Activated T-helper 1 cell treated with anti-CD3 and anti-CD28 coated beads, Interleukin-12 subunit alpha, Interleukin-12 subunit beta, Interleukin-2, Interleukin-4 antibody, amounts not matched to agents 30 ng/mL and 10 ng/mL and 1 ng/mL, durations not matched to agents 14 hours and 24 hours and 36 hours (primary cell): ENCODE measurements at regions of chr1 and their contacts with region 1.

Region 1: DNA sequence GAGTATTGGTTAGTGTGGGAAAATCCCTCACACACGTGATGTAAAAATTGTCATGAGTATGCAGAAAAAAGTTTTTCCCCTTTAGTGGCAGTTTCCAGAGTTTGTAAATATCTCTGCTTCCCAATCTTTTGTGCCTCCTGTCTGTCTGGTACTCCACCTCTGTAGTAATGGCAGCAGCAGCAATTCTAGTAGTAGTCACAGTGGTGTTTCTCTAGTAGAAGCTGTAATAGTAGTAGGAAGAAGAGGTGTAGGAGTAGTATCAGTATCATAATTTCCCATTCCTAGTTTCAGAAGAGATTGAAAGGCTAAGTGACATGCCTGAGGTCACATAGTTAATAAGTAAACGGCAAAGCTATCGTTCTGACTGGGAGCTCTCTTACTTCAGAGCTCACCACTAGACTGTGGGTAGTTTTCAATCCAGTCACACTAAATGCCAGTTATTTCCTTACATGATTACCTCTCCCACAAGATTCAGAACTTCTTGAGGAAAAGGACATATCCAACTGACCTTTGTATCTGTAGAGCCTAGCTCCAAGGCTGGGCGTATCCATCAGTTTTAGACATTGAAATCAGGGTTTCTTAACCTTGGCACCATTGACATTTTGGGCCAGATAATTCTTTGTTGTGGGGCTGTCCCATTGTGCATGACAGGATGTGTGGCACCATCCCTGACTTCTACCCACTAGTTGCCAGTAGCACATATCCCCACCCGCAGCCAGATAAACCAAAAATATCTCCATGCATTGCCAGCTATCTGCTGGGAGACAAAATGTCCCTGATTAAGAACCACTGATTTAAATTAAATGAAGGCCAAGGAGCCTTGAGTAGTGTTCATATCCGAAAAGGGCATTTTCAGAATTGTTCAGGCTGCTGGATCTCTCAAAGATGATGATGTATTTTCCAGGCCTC is 135.9 kb downstream of the FGGY start:
- DNase-seq: no peak
- H3K4me3 Mint-ChIP-seq: no peak overlapping the region
- H3K27ac Mint-ChIP-seq: peak overlapping the region; percentile 61
- H3K4me1 Mint-ChIP-seq: peaks cover 49% of the 10 kb centered on the region
- H3K27me3 Mint-ChIP-seq: no peaks in the 10 kb centered on the region

Region 2: DNA sequence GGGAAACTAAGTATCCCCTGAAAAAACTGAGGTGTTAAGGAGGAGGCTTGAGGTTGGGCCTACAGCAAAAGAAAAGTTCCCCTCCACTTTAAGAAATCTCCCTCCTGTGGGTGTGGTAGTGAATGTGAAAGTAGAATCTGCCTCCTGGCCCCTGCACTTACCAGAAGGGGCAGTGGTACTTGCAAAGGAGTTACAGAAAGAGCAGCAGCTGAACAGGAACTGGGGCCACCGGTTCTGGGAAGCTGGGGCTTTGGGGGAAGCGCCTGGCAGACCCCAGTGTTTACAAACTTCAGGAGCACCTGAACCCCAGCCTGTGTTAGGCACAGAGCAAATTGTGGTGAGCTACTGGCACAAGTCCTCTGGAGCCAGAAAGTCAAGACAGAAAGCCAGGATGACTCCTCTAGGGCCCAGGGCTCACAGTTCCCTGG is 386.0 kb before region 1 on chr1:
- intact Hi-C with region 1: loop called (anchors 2 kb)
- DNase-seq: peak; percentile 62
- H3K4me3 Mint-ChIP-seq: peak overlapping the region; percentile 67
- H3K27ac Mint-ChIP-seq: peak overlapping the region; percentile 71
- H3K4me1 Mint-ChIP-seq: peaks cover 77% of the 10 kb centered on the region
- H3K27me3 Mint-ChIP-seq: no peaks in the 10 kb centered on the region

Region 3: GRCh38 chr1:59296358-59297256 is 136.2 kb before region 1 on chr1 and contains the start of gene FGGY:
- intact Hi-C with region 1: loop called (anchors 2 kb)
- DNase-seq: peak; percentile 86
- H3K4me3 Mint-ChIP-seq: peak within 1 kb of the TSS; percentile 91
- H3K27ac Mint-ChIP-seq: peak within 1 kb of the TSS; percentile 91
- H3K4me1 Mint-ChIP-seq: peaks cover 48% of the 10 kb centered on the region
- H3K27me3 Mint-ChIP-seq: no peaks in the 10 kb centered on the region
- total RNA-seq, gene FGGY: 7.1 and 8.2 TPM in 2 replicates

Region 4: GRCh38 chr1:59354709-59355337 is 78.0 kb before region 1 on chr1:
- intact Hi-C with region 1: loop called (anchors 1 kb)
- DNase-seq: no peak
- H3K4me3 Mint-ChIP-seq: peak overlapping the region; percentile 13
- H3K27ac Mint-ChIP-seq: peak overlapping the region; percentile 94
- H3K4me1 Mint-ChIP-seq: peaks cover 41% of the 10 kb centered on the region
- H3K27me3 Mint-ChIP-seq: peaks cover 2% of the 10 kb centered on the region

Region 5: GRCh38 chr1:59477286-59477685 is 44.5 kb after region 1 on chr1:
- intact Hi-C with region 1: loop called (anchors 1 kb)
- DNase-seq: peak; percentile 30
- H3K4me3 Mint-ChIP-seq: peak overlapping the region; percentile 15
- H3K27ac Mint-ChIP-seq: peak overlapping the region; percentile 84
- H3K4me1 Mint-ChIP-seq: peaks cover 9% of the 10 kb centered on the region
- H3K27me3 Mint-ChIP-seq: no peaks in the 10 kb centered on the region

Region 6: DNA sequence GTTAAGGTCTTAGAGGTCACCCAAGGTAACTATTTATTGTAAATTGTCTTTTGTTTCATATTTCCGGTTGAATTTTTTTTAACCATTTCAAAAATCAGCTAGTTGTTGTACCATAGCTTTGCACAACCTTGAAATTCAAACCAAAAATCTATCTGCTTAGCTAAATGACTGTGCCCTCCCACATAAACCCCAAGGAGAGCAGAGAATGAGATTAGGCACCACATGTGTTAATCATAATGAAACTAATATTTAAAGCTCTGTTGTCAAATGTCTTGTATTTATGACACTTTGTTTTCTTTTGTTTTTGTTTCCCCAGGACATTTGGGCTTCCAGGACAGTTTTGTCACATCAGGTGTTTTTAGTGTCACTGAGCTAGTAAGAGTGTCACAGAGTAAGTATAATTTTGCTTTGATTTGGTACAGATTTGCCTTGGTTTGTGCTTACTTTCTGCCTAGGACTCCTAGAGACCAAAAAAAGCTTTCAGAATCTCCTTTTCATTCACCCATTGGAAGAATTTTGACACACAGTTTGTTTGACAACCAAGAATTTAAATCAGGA is 1899.5 kb after region 1 on chr1:
- intact Hi-C with region 1: loop called (anchors 5 kb)
- DNase-seq: peak; percentile 14
- H3K4me3 Mint-ChIP-seq: peak overlapping the region; percentile 4
- H3K27ac Mint-ChIP-seq: peak overlapping the region; percentile 77
- H3K4me1 Mint-ChIP-seq: peaks cover 29% of the 10 kb centered on the region
- H3K27me3 Mint-ChIP-seq: peaks cover 23% of the 10 kb centered on the region